ENCODE measurements at regions of chr2 and their contacts with region 1.

Region 1: DNA sequence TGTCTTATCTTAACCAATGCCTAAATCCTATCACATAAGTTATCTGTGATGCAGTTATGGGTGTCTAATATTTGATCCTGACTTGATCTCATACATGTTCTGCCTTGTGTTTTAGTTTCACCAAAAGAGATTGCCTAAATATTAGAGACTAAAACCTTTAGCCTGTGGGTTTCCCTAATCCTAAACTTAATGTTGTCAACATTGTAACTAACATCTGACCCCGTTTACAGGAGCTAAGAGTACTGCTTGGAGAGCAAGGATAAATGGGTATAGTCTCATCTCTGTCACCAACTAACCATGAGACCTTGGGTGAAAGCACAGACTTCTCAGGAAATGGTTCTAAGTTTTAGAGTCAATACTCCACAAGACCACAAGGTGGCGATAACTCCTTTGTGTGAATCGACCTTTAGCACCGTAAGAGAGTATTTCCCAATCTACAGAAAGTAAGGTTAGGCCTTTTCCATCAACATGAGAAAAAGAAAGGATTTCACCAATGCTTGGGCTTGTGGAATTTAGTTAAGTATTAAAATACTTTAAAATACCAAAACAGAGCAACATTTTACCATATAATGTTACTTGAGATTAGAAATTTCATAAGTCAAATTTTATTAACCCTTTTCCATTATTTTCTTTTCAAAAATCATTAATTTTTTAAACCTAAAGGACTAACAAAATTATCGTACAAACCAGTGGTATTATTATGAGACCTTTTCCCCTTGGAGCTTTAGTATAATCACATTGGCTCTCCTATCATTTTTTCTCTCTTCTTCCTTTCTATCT is 60.5 kb downstream of the G6PC2 start:
- DNase-seq: no peak
- ATAC-seq: peak; percentile 89

Region 2: DNA sequence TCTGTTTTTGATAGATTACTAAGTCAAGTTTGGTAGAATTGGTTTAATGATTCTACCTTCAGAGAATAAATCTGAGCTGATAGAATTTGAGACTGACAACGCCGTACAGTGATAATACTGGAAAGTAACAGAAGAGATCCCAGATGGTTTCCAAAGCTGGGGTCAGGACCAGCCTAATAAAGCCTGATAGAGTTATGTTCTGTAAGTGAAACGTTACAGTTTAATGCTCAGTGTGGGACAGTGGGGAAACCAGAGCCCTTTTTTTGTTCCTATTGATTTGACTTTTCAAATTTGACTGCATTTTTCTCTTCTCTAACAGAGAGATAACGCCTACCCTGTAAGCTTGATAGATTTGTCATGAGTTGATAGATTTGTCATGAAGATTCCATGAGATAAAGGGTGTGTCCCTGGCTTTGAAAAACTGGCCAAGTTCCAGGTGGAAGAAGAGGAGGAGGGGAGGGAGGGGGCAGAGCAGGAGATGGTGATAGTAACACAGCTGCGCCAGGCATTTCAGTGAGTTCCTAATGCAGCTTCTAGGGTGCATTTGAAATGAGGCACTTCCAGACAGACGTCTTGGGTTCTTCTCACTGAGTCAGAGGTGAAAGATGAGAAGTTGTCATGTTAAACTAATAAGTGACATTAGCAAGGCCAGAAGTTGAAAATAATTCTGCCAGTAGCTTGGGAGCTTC is 440.4 kb before region 1 on chr2:
- intact Hi-C with region 1: no loop called
- DNase-seq: no peak
- ATAC-seq: peak; percentile 51

Region 3: GRCh38 chr2:169131587-169132512 is 170.2 kb after region 1 on chr2:
- intact Hi-C with region 1: loop called (anchors 5 kb)
- DNase-seq: no peak
- ATAC-seq: peak; percentile 44

Measured in left ventricle myocardium superior (tissue), 1 donor.